Activated naive CD4-positive, alpha-beta T cell treated with anti-CD3 and anti-CD28 coated beads for 36 hours (primary cell): ENCODE measurements at regions of chr1 and their contacts with region 1.

Region 1: GRCh38 chr1:26744075-26744959 is 43.4 kb upstream of the PIGV start:
- DNase-seq: peak; percentile 92
- H3K4me3 Mint-ChIP-seq: peak overlapping the region; percentile 58
- H3K27ac Mint-ChIP-seq: peak overlapping the region; percentile 94
- H3K4me1 Mint-ChIP-seq: peaks cover 88% of the 10 kb centered on the region
- H3K27me3 Mint-ChIP-seq: no peaks in the 10 kb centered on the region

Region 2: DNA sequence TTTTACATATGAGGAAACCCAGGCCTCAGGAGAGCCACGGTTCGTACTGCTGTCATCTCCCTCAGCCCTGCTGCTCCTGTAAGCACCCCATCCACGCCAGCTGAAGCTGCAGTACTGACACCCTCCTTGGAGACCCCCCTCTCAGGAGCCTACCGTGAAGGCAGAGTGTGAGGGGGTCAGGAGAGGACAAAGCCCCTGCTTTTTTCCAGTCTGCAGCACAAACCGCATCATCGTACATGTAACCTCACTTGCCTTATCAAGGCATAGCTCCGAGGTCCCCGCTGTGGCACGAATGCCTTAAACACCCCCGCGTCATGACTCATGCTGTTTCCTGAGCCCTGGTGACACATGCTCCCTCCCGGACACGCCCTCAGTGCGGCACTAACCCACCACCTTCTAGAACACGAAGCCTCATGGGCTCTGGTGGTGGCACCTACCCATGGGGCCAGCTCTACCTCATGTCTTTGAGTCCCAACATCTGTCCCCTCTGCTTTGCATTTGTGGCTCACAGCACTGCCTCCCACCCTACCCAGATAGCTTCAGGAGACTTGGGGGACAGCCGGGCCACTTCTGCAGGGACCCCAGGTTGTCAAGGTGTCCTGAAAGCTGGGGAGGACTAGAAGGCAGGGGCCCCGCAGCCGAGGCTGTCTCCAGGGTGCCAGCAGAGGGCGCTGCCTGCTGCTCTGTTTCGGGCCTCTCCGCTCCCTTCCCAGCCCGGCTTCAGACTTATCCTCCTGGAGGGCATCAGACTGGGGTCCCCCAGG is 459.5 kb before region 1 on chr1:
- CTCF ChIA-PET with region 1: no interaction called
- intact Hi-C with region 1: loop called (anchors 1 kb)
- DNase-seq: peak; percentile 96
- H3K4me3 Mint-ChIP-seq: peak overlapping the region; percentile 36
- H3K27ac Mint-ChIP-seq: peak overlapping the region; percentile 92
- H3K4me1 Mint-ChIP-seq: peaks cover 88% of the 10 kb centered on the region
- H3K27me3 Mint-ChIP-seq: no peaks in the 10 kb centered on the region

Region 3: DNA sequence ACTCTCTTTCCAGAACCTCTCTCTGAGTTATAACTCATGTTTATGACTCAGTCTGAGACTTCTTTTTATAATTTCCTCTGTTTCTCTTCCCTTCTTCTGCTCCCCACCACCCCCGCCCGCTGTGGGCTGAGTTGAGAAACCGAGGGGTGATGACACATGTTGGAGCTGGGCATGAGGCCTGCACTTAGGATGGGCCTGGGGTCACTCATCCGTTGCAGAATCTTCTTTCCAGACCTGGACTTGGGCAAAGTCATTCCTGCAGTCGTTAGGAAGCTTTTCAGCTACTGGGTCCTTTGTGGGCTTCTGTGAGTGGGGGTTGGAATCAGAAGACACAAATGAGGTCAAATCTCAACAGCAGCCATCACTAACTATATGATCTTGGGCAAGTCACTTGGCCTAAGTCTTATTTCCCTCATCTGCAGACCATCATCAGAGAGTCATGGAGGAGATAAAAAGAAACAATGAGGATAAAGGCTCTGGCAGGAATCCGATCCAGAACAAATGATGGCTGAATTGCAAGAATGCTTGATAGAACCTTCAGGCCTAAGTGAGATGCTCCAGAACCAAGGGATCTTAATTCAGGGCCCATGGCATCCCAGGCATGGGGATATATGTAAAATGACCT is 161.4 kb before region 1 on chr1:
- CTCF ChIA-PET with region 1: no interaction called
- intact Hi-C with region 1: loop called (anchors 5 kb)
- DNase-seq: peak; percentile 90
- H3K4me3 Mint-ChIP-seq: no peak overlapping the region
- H3K27ac Mint-ChIP-seq: peak overlapping the region; percentile 72
- H3K4me1 Mint-ChIP-seq: peaks cover 51% of the 10 kb centered on the region
- H3K27me3 Mint-ChIP-seq: no peaks in the 10 kb centered on the region

Region 4: DNA sequence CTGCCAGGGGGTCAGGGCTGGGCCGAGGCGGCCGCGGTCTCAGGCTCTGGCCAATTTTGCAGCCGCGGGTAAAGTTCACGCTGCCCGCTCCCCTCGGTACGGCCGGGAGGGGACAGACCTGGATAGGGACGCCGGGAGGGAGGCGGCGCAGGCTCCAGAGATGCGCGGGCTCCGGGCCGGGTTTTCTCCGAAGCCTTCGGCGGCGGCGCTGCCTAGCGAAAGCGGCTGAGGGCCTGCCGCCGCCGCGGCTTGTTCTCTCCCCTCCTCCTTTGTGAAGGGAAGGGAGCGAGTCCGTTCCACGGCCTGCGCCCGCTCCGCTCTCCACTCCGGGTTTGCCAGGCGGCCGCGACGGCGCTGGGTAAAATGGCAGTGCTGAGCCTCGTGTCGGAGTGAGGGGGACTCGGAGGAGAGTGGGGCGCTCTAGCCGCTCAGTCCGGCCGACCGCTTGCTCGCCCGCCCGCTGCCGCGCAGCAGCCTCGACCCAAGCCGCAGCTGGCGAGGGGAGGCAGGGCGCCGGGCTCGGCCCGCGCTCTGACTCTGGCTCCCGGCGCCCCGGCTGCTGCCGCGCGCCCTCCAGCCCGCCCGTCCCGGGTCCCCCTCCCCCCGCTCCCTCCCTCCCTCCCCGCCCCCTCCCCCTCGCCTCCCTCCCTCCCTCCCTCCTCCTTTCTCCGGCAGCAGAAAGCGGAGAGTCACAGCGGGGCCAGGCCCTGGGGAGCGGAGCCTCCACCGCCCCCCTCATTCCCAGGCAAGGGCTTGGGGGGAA is 48.8 kb before region 1 on chr1 and contains the start of gene ARID1A:
- CTCF ChIA-PET with region 1: interaction called, 6 read pairs
- intact Hi-C with region 1: loop called (anchors 1 kb)
- DNase-seq: peak; percentile 95
- H3K4me3 Mint-ChIP-seq: peak within 1 kb of the TSS; percentile 81
- H3K27ac Mint-ChIP-seq: peak within 1 kb of the TSS; percentile 91
- H3K4me1 Mint-ChIP-seq: peaks cover 22% of the 10 kb centered on the region
- H3K27me3 Mint-ChIP-seq: no peaks in the 10 kb centered on the region
- total RNA-seq, gene ARID1A: 65.0 to 65.9 TPM

Region 5: DNA sequence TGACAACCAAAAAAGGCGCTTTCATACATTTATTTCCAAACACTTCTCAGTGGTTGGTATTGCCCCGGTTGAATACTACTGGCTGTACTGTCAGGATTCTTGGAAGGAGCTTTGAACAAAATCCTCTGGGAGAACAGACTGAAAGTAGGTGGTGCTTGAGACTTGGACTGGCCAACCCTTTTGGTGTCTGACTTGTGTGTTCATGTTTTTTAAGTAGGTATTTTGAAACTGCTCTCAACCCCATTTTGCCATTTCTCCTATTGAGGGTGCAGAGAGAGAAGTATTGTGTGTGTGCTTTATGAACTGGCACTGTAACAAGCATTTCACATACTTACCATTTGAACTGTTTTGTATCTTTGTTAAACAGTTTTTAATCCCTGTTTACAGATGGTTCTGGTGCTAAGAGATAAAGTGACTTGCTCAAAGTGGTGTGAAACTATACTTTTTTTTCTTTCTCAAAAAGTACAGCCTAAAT is 27.3 kb before region 1 on chr1:
- CTCF ChIA-PET with region 1: interaction called, 10 read pairs
- intact Hi-C with region 1: loop called (anchors 1 kb)
- DNase-seq: no peak
- H3K4me3 Mint-ChIP-seq: no peak overlapping the region
- H3K27ac Mint-ChIP-seq: peak overlapping the region; percentile 51
- H3K4me1 Mint-ChIP-seq: peaks cover 88% of the 10 kb centered on the region
- H3K27me3 Mint-ChIP-seq: no peaks in the 10 kb centered on the region

Region 6: GRCh38 chr1:26723013-26723991 is 21.0 kb before region 1 on chr1:
- CTCF ChIA-PET with region 1: interaction called, 5 read pairs
- intact Hi-C with region 1: loop called (anchors 1 kb)
- DNase-seq: peak; percentile 72
- H3K4me3 Mint-ChIP-seq: peak overlapping the region; percentile 30
- H3K27ac Mint-ChIP-seq: peak overlapping the region; percentile 82
- H3K4me1 Mint-ChIP-seq: peaks cover 89% of the 10 kb centered on the region
- H3K27me3 Mint-ChIP-seq: no peaks in the 10 kb centered on the region